CD4-positive, alpha-beta T cell (primary cell): ENCODE measurements at regions of chr17 and their contacts with region 1.

Region 1: DNA sequence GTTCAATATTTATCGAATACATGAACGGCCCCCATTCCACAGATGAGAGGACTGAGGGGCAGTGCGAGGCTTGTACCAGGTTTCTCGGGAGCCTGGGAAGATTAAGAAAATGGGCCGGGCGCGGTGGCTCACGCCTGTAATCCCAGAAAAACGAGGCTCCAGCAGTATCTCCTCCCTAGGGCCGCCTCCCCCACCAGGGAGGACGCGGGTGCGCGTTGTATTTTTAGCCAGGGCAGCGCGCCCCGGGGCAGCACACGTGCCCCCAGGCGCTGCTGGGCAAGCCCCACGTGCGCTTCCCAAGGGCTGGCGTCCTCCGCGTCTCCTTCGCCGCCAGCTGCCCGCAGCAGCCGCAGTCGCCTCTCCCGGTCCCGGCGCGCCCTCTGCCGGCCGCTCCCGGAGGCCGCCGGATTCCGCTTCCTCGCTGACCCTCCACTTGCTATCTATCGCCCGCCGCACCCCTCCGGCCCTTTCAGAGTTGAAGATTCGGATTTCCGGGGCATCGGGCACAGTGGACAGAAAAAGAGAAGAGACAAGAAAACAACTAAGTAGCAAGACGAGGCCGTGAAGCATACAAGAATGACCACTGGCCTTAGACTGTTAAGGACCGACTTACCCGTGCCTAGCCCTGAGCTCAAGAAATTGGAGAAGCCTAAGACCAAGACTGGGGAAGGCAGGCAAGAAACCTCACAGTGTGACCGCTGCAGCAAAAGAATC is 1.9 kb upstream of the YBX2 start:
- DNase-seq: peak; percentile 29 to 87 (median 58)
- ATAC-seq: peak; percentile 9
- H3K4me3 ChIP-seq: peak overlapping the region; percentile 10
- H3K4me3 Mint-ChIP-seq: peak overlapping the region; percentile 67
- H3K27ac ChIP-seq: no peak overlapping the region
- H3K27ac Mint-ChIP-seq: no peak overlapping the region
- H3K4me1 ChIP-seq: peaks cover 32% of the 10 kb centered on the region
- H3K4me1 Mint-ChIP-seq: peaks cover 19% of the 10 kb centered on the region
- H3K27me3 ChIP-seq: peaks cover 14 to 17% of the 10 kb centered on the region in 2 experiments
- H3K27me3 Mint-ChIP-seq: peaks cover 31% of the 10 kb centered on the region
- CTCF ChIP-seq: peak; percentile 98

Region 2: DNA sequence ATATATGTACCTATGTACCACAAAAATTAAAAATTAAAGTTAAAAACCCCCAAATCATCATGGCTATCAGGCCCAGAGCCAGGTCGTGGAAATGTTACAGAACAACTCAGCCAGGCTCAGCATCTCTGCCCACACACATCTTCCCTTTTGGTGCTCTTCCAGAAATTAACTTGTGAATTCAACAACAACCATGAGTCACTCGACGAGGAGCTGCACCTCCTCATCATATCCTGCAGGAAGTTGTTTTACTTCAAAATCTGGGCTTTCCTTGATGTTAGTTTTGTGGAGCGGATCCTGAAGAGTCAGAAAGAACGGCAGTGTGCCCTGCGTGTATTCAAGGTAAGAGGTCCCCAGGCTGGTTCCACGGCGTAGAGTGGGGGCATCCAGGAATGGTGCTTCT is 509.7 kb before region 1 on chr17:
- CTCF ChIA-PET with region 1: no interaction called
- POLR2A ChIA-PET with region 1: no interaction called
- intact Hi-C with region 1: no loop called
- DNase-seq: no peak
- ATAC-seq: no peak
- H3K4me3 ChIP-seq: no peak overlapping the region
- H3K4me3 Mint-ChIP-seq: no peak overlapping the region
- H3K27ac ChIP-seq: no peak overlapping the region
- H3K27ac Mint-ChIP-seq: no peak overlapping the region
- H3K4me1 ChIP-seq: no peaks in the 10 kb centered on the region
- H3K4me1 Mint-ChIP-seq: peaks cover 13% of the 10 kb centered on the region
- H3K27me3 ChIP-seq: peaks cover 10 to 31% of the 10 kb centered on the region in 2 experiments
- H3K27me3 Mint-ChIP-seq: peaks cover 65% of the 10 kb centered on the region
- CTCF ChIP-seq: no peak

Region 3: GRCh38 chr17:6969323-6969726 is 327.0 kb before region 1 on chr17:
- CTCF ChIA-PET with region 1: no interaction called
- POLR2A ChIA-PET with region 1: no interaction called
- intact Hi-C with region 1: no loop called
- DNase-seq: no peak
- ATAC-seq: no peak
- H3K4me3 ChIP-seq: no peak overlapping the region
- H3K4me3 Mint-ChIP-seq: no peak overlapping the region
- H3K27ac ChIP-seq: no peak overlapping the region
- H3K27ac Mint-ChIP-seq: no peak overlapping the region
- H3K4me1 ChIP-seq: no peaks in the 10 kb centered on the region
- H3K4me1 Mint-ChIP-seq: no peaks in the 10 kb centered on the region
- H3K27me3 ChIP-seq: no peaks in the 10 kb centered on the region
- H3K27me3 Mint-ChIP-seq: no peaks in the 10 kb centered on the region
- CTCF ChIP-seq: no peak

Region 4: GRCh38 chr17:7136266-7136877 is 160.0 kb before region 1 on chr17:
- CTCF ChIA-PET with region 1: no interaction called
- POLR2A ChIA-PET with region 1: no interaction called
- intact Hi-C with region 1: loop called in 1 of 2 experiments (anchors 2 kb)
- DNase-seq: peak; percentile 67 to 92 (median 78)
- ATAC-seq: no peak
- H3K4me3 ChIP-seq: no peak overlapping the region
- H3K4me3 Mint-ChIP-seq: no peak overlapping the region
- H3K27ac ChIP-seq: no peak overlapping the region
- H3K27ac Mint-ChIP-seq: peak overlapping the region; percentile 18
- H3K4me1 ChIP-seq: peaks cover 30% of the 10 kb centered on the region
- H3K4me1 Mint-ChIP-seq: peaks cover 24% of the 10 kb centered on the region
- H3K27me3 ChIP-seq: peaks cover 0 to 7% of the 10 kb centered on the region in 2 experiments
- H3K27me3 Mint-ChIP-seq: peaks cover 8% of the 10 kb centered on the region
- CTCF ChIP-seq: peak; percentile 94

Region 5: DNA sequence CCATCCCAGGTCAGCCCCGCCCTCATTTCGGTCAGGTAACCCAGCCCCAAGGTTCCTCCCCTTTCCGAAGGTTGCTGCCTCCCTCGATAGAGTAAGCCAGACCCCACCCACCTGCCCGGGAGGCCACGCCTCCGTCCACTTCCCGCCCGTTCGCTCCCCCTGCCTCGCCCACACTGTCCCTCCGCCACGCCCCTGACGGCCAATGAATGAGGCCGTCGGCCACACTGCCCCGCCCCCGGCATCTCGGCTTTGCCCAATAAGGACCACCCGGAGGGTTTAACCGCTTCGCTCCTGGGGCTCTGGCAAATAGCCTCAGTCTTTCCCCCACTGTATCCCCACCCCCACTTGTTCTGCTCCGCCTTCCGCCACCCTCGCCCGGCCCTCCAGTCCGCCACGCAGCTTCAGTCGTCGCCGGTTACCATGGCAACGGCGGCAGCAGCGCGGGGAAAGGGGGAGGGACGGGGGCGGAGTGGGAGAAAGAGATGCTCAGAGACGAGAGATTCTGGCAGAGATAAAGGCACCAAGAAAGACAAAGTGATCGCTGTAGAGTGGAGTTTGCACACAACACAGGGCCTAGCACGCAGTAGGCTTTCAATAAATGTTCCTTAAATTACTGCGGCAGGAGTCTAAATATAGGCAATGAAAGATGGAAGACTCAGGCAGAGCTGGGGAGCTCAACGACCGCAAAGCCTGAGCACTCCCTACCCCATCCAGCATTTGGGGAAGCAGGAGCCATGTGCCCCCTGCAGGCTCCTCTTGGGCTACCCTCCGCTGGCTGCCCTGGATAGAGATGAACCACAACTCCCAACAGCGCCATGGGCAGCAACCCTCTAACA is 81.8 kb before region 1 on chr17:
- CTCF ChIA-PET with region 1: interaction called, 31 read pairs
- POLR2A ChIA-PET with region 1: no interaction called
- intact Hi-C with region 1: no loop called
- DNase-seq: peak; percentile 97 to 100 (median 99)
- ATAC-seq: peak; percentile 72
- H3K4me3 ChIP-seq: peak overlapping the region; percentile 64
- H3K4me3 Mint-ChIP-seq: peak overlapping the region; percentile 93
- H3K27ac ChIP-seq: peak overlapping the region; percentile 85 to 99
- H3K27ac Mint-ChIP-seq: peak overlapping the region; percentile 93
- H3K4me1 ChIP-seq: peaks cover 70% of the 10 kb centered on the region
- H3K4me1 Mint-ChIP-seq: peaks cover 70% of the 10 kb centered on the region
- H3K27me3 ChIP-seq: no peaks in the 10 kb centered on the region
- H3K27me3 Mint-ChIP-seq: peaks cover 5% of the 10 kb centered on the region
- CTCF ChIP-seq: peak; percentile 56

Region 6: GRCh38 chr17:7219812-7220581 is 76.3 kb before region 1 on chr17 and contains the starts of genes ACADVL and DLG4:
- CTCF ChIA-PET with region 1: interaction called, 31 read pairs
- POLR2A ChIA-PET with region 1: no interaction called
- intact Hi-C with region 1: loop called in 1 of 2 experiments (anchors 2 kb)
- DNase-seq: peak; percentile 53 to 86 (median 74)
- ATAC-seq: peak; percentile 50
- H3K4me3 ChIP-seq: peak within 1 kb of the TSS; percentile 70
- H3K4me3 Mint-ChIP-seq: peak within 1 kb of the TSS; percentile 95
- H3K27ac ChIP-seq: peak within 1 kb of the TSS; percentile 75 to 79
- H3K27ac Mint-ChIP-seq: peak within 1 kb of the TSS; percentile 76
- H3K4me1 ChIP-seq: peaks cover 61% of the 10 kb centered on the region
- H3K4me1 Mint-ChIP-seq: peaks cover 54% of the 10 kb centered on the region
- H3K27me3 ChIP-seq: no peaks in the 10 kb centered on the region
- H3K27me3 Mint-ChIP-seq: no peaks in the 10 kb centered on the region
- CTCF ChIP-seq: no peak
- total RNA-seq, gene ACADVL: 237 to 257 TPM
- total RNA-seq, gene DLG4: 10.2 to 11.0 TPM

Region 7: DNA sequence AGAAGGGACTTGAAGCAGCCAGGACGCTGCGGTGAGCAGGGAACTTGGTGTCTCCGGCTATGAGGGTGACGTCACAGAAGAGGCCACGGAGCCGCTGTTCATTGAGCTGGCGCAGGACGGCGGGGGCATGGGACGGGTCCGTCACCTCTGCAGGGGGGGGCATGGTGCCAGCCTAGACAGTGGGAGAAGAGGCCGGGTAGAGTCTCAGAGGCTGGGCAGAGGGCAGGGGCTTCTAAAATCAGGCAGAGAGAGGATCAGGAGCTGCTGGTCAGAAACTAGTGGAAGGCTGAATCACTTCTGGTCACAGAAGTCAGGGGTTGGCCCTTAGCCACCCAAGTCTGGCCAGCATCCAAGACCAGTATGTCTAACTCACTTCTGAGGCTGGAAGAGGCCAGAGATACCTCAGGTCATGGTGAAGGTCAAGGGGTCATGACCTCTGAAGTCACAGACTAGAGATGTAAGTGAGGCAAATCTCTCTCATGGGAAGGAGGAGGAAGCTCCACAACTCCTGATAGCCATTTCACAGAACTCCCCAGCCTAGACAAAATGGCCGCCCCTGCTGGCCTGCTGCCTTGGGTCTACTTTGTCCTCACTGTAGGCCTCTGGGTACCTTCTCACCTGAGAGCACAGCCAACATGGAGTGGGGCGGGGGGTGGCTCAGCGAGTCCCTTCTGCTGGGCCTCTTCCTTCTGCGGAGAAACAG is 170.4 kb after region 1 on chr17:
- CTCF ChIA-PET with region 1: no interaction called
- POLR2A ChIA-PET with region 1: no interaction called
- intact Hi-C with region 1: no loop called
- DNase-seq: peak in 2 of 14 experiments; percentile 45 to 58
- ATAC-seq: no peak
- H3K4me3 ChIP-seq: no peak overlapping the region
- H3K4me3 Mint-ChIP-seq: no peak overlapping the region
- H3K27ac ChIP-seq: no peak overlapping the region
- H3K27ac Mint-ChIP-seq: no peak overlapping the region
- H3K4me1 ChIP-seq: peaks cover 13% of the 10 kb centered on the region
- H3K4me1 Mint-ChIP-seq: peaks cover 11% of the 10 kb centered on the region
- H3K27me3 ChIP-seq: no peaks in the 10 kb centered on the region
- H3K27me3 Mint-ChIP-seq: no peaks in the 10 kb centered on the region
- CTCF ChIP-seq: no peak